Dorsolateral prefrontal cortex (tissue), 120 donors: ENCODE measurements at regions of chr9 and their contacts with region 1.

Region 1: GRCh38 chr9:87324613-87325194 is 173.0 kb upstream of the DAPK1 start:
- DNase-seq: no peak
- H3K4me3 ChIP-seq: no peak overlapping the region
- H3K27ac ChIP-seq: no peak overlapping the region
- H3K27me3 ChIP-seq: no peaks in the 10 kb centered on the region
- CTCF ChIP-seq: peak; percentile 76 to 97 (median 89)

Region 2: GRCh38 chr9:86434039-86434726 is 890.5 kb before region 1 on chr9:
- intact Hi-C with region 1: loop called (anchors 5 to 10 kb)
- DNase-seq: peak in 1 of 10 donors; percentile 3
- H3K4me3 ChIP-seq: peak overlapping the region in 1 of 59 donors; percentile 26
- H3K27ac ChIP-seq: no peak overlapping the region
- H3K27me3 ChIP-seq: peaks cover 0 to 4% (median 0%) of the 10 kb centered on the region in 45 donors
- CTCF ChIP-seq: peak; percentile 56 to 87 (median 68)

Region 3: GRCh38 chr9:86486891-86487837 is 837.5 kb before region 1 on chr9:
- intact Hi-C with region 1: loop called (anchors 2 kb)
- DNase-seq: no peak
- H3K4me3 ChIP-seq: no peak overlapping the region
- H3K27ac ChIP-seq: no peak overlapping the region
- H3K27me3 ChIP-seq: no peaks in the 10 kb centered on the region
- CTCF ChIP-seq: peak; percentile 50 to 91 (median 76)

Region 4: DNA sequence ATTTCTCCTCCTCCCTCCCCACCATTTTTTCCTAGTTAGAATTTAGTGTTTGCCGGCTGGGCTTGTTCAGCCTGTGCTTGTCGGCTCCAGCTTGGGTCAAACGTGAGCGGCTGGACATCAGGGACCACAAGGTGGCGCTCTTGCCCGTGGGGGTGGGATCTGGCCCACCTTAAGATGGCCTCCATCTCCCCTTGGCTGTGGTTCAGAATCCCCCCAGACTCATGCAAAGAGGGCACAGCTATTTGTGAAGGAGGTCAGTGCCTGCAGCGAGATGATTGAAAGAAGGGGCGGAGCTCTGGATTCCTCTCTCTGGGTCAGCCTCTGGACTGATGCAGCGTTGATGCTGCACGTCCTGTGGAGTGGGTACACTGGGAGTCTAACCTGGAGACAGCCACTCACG is 687.2 kb before region 1 on chr9:
- intact Hi-C with region 1: loop called in 1 of 2 experiments (anchors 10 kb)
- DNase-seq: no peak
- H3K4me3 ChIP-seq: no peak overlapping the region
- H3K27ac ChIP-seq: no peak overlapping the region
- H3K27me3 ChIP-seq: peaks cover 0 to 8% (median 0%) of the 10 kb centered on the region in 45 donors
- CTCF ChIP-seq: peak in 51 of 56 donors; percentile 18 to 68 (median 47)

Region 5: GRCh38 chr9:87107072-87107471 is 217.6 kb before region 1 on chr9:
- intact Hi-C with region 1: loop called in 1 of 2 experiments (anchors 10 kb)
- DNase-seq: peak in 2 of 10 donors; percentile 14 to 38
- H3K4me3 ChIP-seq: no peak overlapping the region
- H3K27ac ChIP-seq: no peak overlapping the region
- H3K27me3 ChIP-seq: no peaks in the 10 kb centered on the region
- CTCF ChIP-seq: peak in 44 of 56 donors; percentile 11 to 63 (median 34)

Region 6: GRCh38 chr9:87157366-87158031 is 167.2 kb before region 1 on chr9:
- intact Hi-C with region 1: loop called in 1 of 2 experiments (anchors 10 kb)
- DNase-seq: no peak
- H3K4me3 ChIP-seq: no peak overlapping the region
- H3K27ac ChIP-seq: no peak overlapping the region
- H3K27me3 ChIP-seq: no peaks in the 10 kb centered on the region
- CTCF ChIP-seq: no peak